Gastrocnemius medialis (tissue), 4 donors: ENCODE measurements at regions of chr14 and their contacts with region 1.

Region 1: DNA sequence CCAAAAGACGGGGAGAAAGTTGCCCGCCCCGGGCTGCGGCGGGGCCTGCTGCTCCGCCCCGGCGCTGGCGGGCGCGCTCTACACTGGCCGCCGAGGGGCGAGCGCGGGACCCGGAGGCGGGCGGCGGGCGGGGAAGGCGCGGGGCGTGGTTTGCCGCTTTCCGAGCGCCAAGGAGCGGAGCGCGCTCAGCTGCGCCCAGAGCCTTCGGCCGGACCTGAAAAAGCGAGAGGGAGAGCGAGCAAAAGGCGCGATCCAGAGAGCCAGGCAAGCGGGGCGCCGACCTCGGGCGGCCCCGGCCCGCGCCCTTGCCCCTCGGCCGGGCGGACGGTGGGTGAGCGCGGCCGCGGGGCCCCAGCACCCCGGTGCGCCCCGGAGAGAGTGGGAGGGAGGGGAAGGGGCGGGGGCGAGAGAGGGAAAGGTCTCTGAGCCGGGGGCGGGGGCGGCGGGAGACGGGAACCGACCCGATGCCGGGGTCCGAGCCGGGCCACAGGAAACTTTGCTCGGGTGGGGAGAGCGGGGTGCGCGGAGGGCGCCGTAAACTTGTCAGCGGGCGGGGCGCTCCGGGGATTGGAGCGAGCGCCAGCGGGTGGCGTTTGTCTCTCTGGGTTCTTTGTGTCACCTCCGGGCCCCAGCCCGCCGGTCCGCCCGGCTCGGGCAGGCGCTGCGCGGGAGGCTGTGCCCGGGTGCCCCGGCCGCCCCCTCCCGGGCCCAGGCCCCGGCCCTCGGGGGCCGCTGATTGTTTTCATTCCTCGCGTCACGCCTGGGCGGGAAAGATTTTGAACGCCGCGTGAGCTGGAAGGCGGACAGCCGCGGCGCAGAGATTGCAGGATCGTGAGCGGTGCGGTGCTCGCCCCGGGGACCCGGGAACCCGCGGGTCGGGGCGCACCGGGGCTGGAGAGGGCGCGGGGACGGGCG is at the start of gene SYNE2:
- DNase-seq: peak; percentile 58 to 62
- ATAC-seq: peak; percentile 85
- H3K4me3 ChIP-seq: peak within 1 kb of the TSS; percentile 67 to 86 (median 82)
- H3K27ac ChIP-seq: peak within 1 kb of the TSS; percentile 88 to 94 (median 94)
- H3K4me1 ChIP-seq: peaks cover 3 to 21% of the 10 kb centered on the region in 2 donors
- H3K27me3 ChIP-seq: no peaks in the 10 kb centered on the region
- CTCF ChIP-seq: peak in 4 of 5 experiments; percentile 22 to 48 (median 41)
- POLR2A ChIP-seq: peak; percentile 58 to 66
- total RNA-seq, gene SYNE2: 96.9 to 207 (median 182) TPM

Region 2: GRCh38 chr14:63641473-63642228 is 211.4 kb before region 1 on chr14 and contains the start of gene WDR89:
- in situ Hi-C with region 1: no loop called
- intact Hi-C with region 1: loop called (anchors 5 kb)
- DNase-seq: peak; percentile 98 to 99
- ATAC-seq: peak; percentile 91 to 93
- H3K4me3 ChIP-seq: peak within 1 kb of the TSS; percentile 68 to 88 (median 78)
- H3K27ac ChIP-seq: peak within 1 kb of the TSS; percentile 90 to 97 (median 92)
- H3K4me1 ChIP-seq: peaks cover 5 to 12% of the 10 kb centered on the region in 2 donors
- H3K27me3 ChIP-seq: no peaks in the 10 kb centered on the region
- CTCF ChIP-seq: peak; percentile 90 to 92 (median 91)
- POLR2A ChIP-seq: peak; percentile 41 to 62
- total RNA-seq, gene WDR89: 3.5 to 6.2 (median 5.1) TPM

Region 3: GRCh38 chr14:63875311-63875710 is 22.2 kb after region 1 on chr14:
- in situ Hi-C with region 1: no loop called
- intact Hi-C with region 1: loop called (anchors 2 kb)
- DNase-seq: no peak
- ATAC-seq: peak; percentile 29 to 42
- H3K4me3 ChIP-seq: no peak overlapping the region
- H3K27ac ChIP-seq: peak overlapping the region; percentile 71 to 74 (median 72)
- H3K4me1 ChIP-seq: peaks cover 36 to 50% of the 10 kb centered on the region in 2 donors
- H3K27me3 ChIP-seq: no peaks in the 10 kb centered on the region
- CTCF ChIP-seq: no peak
- POLR2A ChIP-seq: peak in 1 of 2 donors; percentile 46

Region 4: GRCh38 chr14:63922696-63923421 is 69.8 kb after region 1 on chr14:
- in situ Hi-C with region 1: no loop called
- intact Hi-C with region 1: loop called (anchors 1 kb)
- DNase-seq: peak in 1 of 2 donors; percentile 21
- ATAC-seq: peak; percentile 60 to 91
- H3K4me3 ChIP-seq: no peak overlapping the region
- H3K27ac ChIP-seq: peak overlapping the region in 2 of 4 donors; percentile 37 to 54
- H3K4me1 ChIP-seq: peaks cover 0 to 7% of the 10 kb centered on the region in 2 donors
- H3K27me3 ChIP-seq: no peaks in the 10 kb centered on the region
- CTCF ChIP-seq: no peak
- POLR2A ChIP-seq: no peak

Region 5: GRCh38 chr14:64117671-64118402 is 264.8 kb after region 1 on chr14:
- in situ Hi-C with region 1: no loop called
- intact Hi-C with region 1: loop called (anchors 10 kb)
- DNase-seq: peak; percentile 84 to 90
- ATAC-seq: peak; percentile 71 to 79
- H3K4me3 ChIP-seq: no peak overlapping the region
- H3K27ac ChIP-seq: peak overlapping the region; percentile 89 to 94 (median 92)
- H3K4me1 ChIP-seq: peaks cover 34 to 61% of the 10 kb centered on the region in 2 donors
- H3K27me3 ChIP-seq: no peaks in the 10 kb centered on the region
- CTCF ChIP-seq: no peak
- POLR2A ChIP-seq: no peak